MCF 10A (cell line): ENCODE measurements at regions of chr2 and their contacts with region 1.

Region 1: DNA sequence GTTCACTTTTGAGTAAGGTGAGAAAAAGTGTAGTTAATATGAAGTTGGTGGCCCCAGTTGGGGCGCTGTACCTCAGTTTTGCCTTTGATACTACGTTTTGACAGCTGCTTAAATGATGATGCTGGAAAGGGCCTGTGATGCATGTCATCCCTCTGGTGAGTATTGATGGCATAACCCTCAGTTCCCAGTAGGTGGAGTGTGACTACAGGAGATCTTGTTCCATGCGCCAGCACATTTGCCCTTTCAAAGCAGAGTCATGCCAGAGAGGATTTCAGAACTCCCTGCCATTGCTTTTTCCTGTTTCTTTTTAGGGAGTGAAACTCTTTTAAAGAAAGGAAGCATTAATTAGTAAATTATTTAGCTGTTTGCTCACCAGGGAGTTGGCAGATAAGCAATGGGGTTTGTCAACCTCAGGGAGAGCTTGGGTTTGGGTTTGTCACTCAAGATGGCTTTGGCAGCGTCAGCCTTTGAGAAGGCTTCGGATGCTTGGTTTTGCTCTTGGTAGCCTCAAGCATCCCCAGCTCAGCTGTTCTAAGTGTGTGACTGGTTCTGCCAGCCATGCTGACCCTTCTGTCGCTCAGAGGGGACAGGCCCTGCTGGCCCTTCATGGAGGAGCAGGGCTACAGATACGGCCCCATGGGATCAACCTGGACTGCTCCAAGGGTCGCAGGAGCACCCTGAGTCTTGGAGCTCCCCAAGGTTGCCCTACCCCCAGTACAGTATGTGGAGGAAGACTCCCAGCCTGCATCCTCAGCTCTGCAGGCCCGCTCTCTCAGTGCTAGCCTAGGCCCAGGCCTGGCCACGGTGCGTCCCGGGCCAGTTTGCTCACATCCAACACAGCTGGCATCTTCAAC is 29.1 kb downstream of the ARMC9 start:
- DNase-seq: peak; percentile 78
- H3K4me3 Mint-ChIP-seq: no peak overlapping the region
- H3K27ac Mint-ChIP-seq: no peak overlapping the region
- H3K4me1 Mint-ChIP-seq: no peaks in the 10 kb centered on the region
- H3K27me3 Mint-ChIP-seq: no peaks in the 10 kb centered on the region
- CTCF ChIP-seq: peak; percentile 69

Region 2: GRCh38 chr2:231238689-231239088 is 11.2 kb after region 1 on chr2:
- CTCF ChIA-PET with region 1: interaction called, 12 read pairs
- POLR2A ChIA-PET with region 1: no interaction called
- intact Hi-C with region 1: no loop called
- DNase-seq: no peak
- H3K4me3 Mint-ChIP-seq: no peak overlapping the region
- H3K27ac Mint-ChIP-seq: no peak overlapping the region
- H3K4me1 Mint-ChIP-seq: no peaks in the 10 kb centered on the region
- H3K27me3 Mint-ChIP-seq: no peaks in the 10 kb centered on the region
- CTCF ChIP-seq: no peak

Region 3: GRCh38 chr2:231244382-231245252 is 17.1 kb after region 1 on chr2:
- CTCF ChIA-PET with region 1: interaction called, 12 read pairs
- POLR2A ChIA-PET with region 1: interaction called, 4 read pairs
- intact Hi-C with region 1: no loop called
- DNase-seq: no peak
- H3K4me3 Mint-ChIP-seq: no peak overlapping the region
- H3K27ac Mint-ChIP-seq: no peak overlapping the region
- H3K4me1 Mint-ChIP-seq: no peaks in the 10 kb centered on the region
- H3K27me3 Mint-ChIP-seq: no peaks in the 10 kb centered on the region
- CTCF ChIP-seq: no peak

Region 4: DNA sequence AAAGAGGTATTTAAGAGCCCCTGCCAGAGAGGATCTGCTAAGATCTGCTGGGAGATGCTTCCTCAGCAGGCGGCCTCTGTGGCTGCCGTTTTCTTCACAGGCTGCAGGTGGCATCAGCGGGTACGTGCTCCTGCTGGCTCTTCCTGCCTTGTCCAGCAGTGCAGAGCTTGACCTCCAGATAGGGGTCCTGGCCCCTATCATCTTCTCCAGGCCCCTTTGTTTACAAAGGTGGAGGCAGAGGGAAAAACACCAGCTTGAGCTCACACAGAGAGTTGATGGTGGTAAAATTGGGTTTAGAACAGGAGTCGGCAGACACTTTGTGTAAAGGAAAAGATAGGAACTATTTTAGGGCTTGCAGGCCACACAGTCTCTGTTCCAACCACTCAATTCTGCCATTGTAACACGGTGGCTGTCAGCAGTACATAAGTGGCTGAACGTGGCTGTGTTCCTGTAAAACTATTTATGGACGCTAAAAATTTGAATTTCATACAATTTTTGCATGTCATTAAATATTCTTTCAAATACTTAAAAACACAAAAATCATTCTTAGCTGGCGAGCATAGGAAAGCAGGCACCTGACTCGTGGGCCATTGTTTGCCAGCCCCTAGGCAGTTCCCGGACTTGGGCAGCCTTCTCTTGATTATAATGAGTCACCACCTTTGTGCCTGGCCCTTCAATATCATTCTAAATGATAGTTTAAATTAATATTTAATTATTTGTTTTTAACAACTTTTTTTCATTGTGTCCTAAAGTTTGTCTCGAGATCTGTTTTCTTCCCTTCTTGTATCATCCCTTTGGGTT is 69.8 kb after region 1 on chr2:
- CTCF ChIA-PET with region 1: no interaction called
- POLR2A ChIA-PET with region 1: no interaction called
- intact Hi-C with region 1: loop called (anchors 1 kb)
- DNase-seq: peak; percentile 51
- H3K4me3 Mint-ChIP-seq: no peak overlapping the region
- H3K27ac Mint-ChIP-seq: no peak overlapping the region
- H3K4me1 Mint-ChIP-seq: no peaks in the 10 kb centered on the region
- H3K27me3 Mint-ChIP-seq: no peaks in the 10 kb centered on the region
- CTCF ChIP-seq: peak; percentile 42

Region 5: DNA sequence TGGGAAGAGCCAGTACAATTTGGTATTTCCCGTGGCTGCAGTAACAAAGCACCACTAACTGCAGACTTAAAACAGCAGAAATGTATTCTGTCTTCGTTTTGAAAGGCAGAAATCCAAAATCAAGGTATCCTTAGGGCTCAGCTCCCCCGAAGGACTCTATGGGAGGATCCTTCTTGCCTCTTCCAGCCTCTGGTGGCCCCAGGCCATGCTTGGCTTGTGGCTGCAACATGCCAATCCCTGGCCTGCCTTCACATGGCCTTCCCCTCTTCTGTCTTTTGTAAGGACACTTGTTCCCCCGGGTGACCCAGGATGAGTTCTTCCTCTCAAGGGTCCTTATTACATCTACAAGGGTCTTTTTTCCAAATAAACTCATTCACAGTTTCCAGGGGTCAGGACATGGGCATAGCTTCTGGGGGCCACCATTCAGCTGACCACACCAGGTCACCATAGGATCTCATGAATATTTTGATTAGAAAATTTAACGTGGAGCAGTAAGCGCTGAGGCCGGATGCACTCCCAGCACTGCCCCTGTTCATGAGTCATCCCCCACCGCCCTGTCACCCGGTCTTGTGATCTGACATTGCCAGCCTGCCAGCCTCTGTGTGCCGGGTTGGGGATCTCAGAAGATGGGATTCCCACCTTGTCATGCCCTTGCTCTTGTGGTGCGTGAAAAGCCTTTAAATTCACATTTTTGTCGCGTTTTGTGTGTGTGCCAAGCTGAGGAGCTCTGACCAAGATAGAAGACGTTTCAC is 106.8 kb after region 1 on chr2:
- CTCF ChIA-PET with region 1: no interaction called
- POLR2A ChIA-PET with region 1: no interaction called
- intact Hi-C with region 1: no loop called
- DNase-seq: no peak
- H3K4me3 Mint-ChIP-seq: no peak overlapping the region
- H3K27ac Mint-ChIP-seq: no peak overlapping the region
- H3K4me1 Mint-ChIP-seq: no peaks in the 10 kb centered on the region
- H3K27me3 Mint-ChIP-seq: no peaks in the 10 kb centered on the region
- CTCF ChIP-seq: no peak

Region 6: GRCh38 chr2:231399853-231400680 is 172.5 kb after region 1 on chr2:
- CTCF ChIA-PET with region 1: interaction called, 156 read pairs
- POLR2A ChIA-PET with region 1: no interaction called
- intact Hi-C with region 1: loop called (anchors 1 kb)
- DNase-seq: peak; percentile 53
- H3K4me3 Mint-ChIP-seq: no peak overlapping the region
- H3K27ac Mint-ChIP-seq: no peak overlapping the region
- H3K4me1 Mint-ChIP-seq: no peaks in the 10 kb centered on the region
- H3K27me3 Mint-ChIP-seq: no peaks in the 10 kb centered on the region
- CTCF ChIP-seq: no peak

Region 7: DNA sequence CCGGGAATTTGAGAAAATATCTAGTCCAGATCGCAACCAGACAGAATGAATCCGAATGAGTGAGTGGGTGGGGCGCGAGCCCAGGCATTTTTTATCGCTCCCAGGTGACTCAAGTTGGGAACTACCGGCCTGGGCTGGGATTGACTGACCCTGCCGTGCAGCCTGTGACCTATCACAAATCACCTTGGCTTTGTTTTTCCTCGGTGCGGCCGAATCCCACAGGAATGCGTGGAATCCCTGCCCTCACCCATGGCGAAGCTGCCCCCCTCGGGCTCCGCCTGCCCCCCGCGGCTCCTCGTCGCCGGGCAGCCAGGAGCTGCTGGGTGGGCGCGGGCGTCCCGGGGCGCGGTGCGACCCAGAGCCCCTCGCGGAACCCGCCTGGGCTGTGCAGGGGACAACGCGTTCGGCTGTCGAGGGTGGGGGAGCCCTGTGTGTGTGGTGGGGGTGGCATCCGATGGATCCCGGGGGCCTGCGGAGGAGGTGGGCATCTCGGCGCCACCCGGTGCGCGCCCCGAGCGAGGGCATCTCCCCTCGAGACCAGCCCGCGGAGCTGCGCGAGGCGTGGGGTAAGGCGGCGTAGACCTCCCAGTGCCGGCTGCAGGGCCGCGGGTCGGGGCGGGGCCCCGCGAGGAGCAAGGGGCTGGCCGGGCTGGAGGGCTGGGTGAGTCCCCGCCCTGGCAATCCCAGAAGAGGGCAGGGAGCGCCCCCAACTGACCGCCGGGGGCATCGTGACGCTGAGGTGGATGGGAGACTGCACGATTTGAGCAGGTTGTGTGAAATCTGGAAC is 184.5 kb after region 1 on chr2:
- CTCF ChIA-PET with region 1: interaction called, 156 read pairs
- POLR2A ChIA-PET with region 1: interaction called, 3 read pairs
- intact Hi-C with region 1: loop called (anchors 1 kb)
- DNase-seq: peak; percentile 83
- H3K4me3 Mint-ChIP-seq: peak overlapping the region; percentile 70
- H3K27ac Mint-ChIP-seq: no peak overlapping the region
- H3K4me1 Mint-ChIP-seq: no peaks in the 10 kb centered on the region
- H3K27me3 Mint-ChIP-seq: no peaks in the 10 kb centered on the region
- CTCF ChIP-seq: peak; percentile 89

Region 8: DNA sequence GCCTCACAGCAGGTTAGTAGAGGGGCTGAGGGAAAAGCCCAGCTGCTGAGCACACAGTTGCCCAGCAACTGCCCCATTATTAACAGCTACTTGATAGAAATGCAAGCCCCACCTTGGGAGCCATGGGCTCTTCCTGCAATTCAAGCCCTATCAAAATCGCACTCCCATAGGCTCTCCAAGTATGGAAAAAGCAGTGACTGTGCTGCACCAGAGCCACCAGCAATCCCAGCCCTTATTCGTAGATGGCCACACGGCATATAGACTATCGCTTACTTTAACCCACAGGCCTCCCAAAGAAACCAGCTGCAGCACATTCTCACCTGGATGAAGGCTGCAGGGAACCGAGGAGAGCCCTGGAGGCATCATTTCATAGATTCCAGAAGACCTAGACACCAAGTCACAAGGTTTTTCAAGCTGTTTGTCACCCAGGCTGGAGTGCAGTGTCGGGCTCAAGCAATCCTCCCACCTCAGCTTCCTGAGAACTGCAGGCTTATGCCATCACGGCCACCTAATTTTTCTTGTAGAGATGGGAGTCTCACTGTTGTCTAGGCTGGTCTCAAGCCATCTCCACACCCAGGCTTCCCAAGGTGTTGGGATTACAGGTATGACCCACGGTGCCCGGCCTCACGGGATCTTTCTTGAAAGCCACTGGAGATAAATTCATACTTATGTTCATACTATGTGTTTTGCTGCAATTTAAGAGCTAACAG is 225.4 kb after region 1 on chr2:
- CTCF ChIA-PET with region 1: interaction called, 18 read pairs
- POLR2A ChIA-PET with region 1: interaction called, 5 read pairs
- intact Hi-C with region 1: loop called (anchors 1 kb)
- DNase-seq: peak; percentile 30
- H3K4me3 Mint-ChIP-seq: no peak overlapping the region
- H3K27ac Mint-ChIP-seq: peak overlapping the region; percentile 42
- H3K4me1 Mint-ChIP-seq: no peaks in the 10 kb centered on the region
- H3K27me3 Mint-ChIP-seq: no peaks in the 10 kb centered on the region
- CTCF ChIP-seq: no peak

Region 9: GRCh38 chr2:232479341-232480200 is 1252.0 kb after region 1 on chr2:
- CTCF ChIA-PET with region 1: no interaction called
- POLR2A ChIA-PET with region 1: no interaction called
- intact Hi-C with region 1: no loop called
- DNase-seq: no peak
- H3K4me3 Mint-ChIP-seq: no peak overlapping the region
- H3K27ac Mint-ChIP-seq: no peak overlapping the region
- H3K4me1 Mint-ChIP-seq: no peaks in the 10 kb centered on the region
- H3K27me3 Mint-ChIP-seq: peaks cover 37% of the 10 kb centered on the region
- CTCF ChIP-seq: no peak